CD4-positive, alpha-beta memory T cell (primary cell): ENCODE measurements at regions of chr17 and their contacts with region 1.

Region 1: DNA sequence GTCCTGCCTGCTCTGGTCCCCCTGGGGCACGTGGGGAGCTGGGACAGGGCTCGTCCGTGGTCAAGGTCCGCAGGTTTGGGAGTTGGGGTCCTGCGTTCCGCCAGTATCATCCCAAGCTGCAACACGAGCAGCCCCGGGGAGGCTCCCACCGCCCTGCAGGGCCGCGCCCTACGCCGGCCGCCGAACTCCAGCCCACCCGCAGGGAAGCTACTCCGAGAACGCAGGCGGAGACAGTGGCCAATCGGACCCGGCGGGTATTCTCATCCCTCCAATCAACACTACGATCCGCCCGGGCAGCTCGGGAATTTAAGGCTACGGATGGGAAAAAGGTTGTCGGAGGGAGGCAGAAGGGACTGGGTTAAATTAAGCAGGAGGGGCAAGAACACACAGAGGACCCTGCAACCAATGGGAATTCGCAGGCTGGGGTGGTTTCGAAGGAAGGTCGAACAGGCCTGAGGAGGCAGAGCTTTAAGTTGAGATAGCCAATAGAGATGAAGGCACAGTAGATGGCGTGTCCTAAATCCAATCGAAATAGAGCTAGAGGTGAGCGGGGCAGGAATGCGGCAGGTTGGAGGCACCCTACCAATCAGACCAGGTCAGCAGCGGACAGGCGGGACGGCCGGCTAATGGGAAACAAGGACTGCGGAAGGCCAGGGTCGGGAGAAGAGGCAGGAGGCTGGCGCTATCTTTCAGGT is 626 bp downstream of the SPAG7 start:
- DNase-seq: peak; percentile 96 to 99 (median 98)
- H3K4me3 ChIP-seq: peak overlapping the region; percentile 64 to 95
- H3K4me3 Mint-ChIP-seq: peak overlapping the region in 1 of 8 donors; percentile 56
- H3K27ac ChIP-seq: peak overlapping the region; percentile 81
- H3K27ac Mint-ChIP-seq: peak overlapping the region in 2 of 7 donors; percentile 81 to 85
- H3K4me1 ChIP-seq: peaks cover 28% of the 10 kb centered on the region
- H3K4me1 Mint-ChIP-seq: peaks cover 16 to 27% (median 24%) of the 10 kb centered on the region in 4 donors
- H3K27me3 ChIP-seq: no peaks in the 10 kb centered on the region
- H3K27me3 Mint-ChIP-seq: no peaks in the 10 kb centered on the region

Region 2: GRCh38 chr17:4733073-4733531 is 233.9 kb before region 1 on chr17:
- CTCF ChIA-PET with region 1: no interaction called
- POLR2A ChIA-PET with region 1: no interaction called
- intact Hi-C with region 1: loop called (anchors 2 kb)
- DNase-seq: no peak
- H3K4me3 ChIP-seq: no peak overlapping the region
- H3K4me3 Mint-ChIP-seq: peak overlapping the region in 2 of 8 donors; percentile 51 to 67
- H3K27ac ChIP-seq: no peak overlapping the region
- H3K27ac Mint-ChIP-seq: peak overlapping the region in 1 of 7 donors; percentile 90
- H3K4me1 ChIP-seq: peaks cover 18% of the 10 kb centered on the region
- H3K4me1 Mint-ChIP-seq: peaks cover 9 to 32% (median 16%) of the 10 kb centered on the region in 4 donors
- H3K27me3 ChIP-seq: no peaks in the 10 kb centered on the region
- H3K27me3 Mint-ChIP-seq: no peaks in the 10 kb centered on the region

Region 3: DNA sequence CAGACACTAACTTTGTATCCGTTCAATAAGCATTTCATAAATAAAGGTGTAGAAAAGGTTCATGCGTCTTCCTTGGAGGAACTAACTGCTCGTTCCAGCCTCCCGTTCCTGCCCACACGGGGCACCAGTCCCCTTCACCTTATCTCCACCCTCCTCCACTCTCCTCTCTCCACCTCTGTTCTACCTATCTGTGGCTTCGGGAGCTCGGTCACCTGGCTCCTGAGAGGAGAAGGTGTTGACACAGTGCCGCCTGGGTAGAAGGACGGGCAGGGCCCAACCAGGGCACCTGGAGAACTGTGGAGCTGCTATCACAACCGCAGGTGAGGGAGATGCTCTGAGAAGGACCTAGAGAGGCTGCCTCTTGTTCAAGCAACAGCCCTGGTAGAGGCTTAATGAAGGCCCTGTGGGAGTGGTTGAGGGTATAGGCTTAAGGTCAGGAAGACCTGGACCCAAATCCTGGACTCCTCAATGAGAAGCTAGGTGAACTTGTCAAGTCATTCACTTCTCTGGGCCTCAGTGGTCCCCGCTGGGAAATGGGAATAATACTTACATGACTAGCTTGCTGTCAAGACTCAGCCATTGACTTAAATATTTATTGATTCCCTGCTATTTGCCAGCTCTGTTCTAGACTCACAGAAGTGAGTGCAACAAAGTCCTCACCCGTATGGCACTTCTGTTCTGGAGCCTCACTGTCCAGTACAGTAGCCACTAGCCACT is 143.5 kb before region 1 on chr17:
- CTCF ChIA-PET with region 1: no interaction called
- POLR2A ChIA-PET with region 1: no interaction called
- intact Hi-C with region 1: no loop called
- DNase-seq: no peak
- H3K4me3 ChIP-seq: no peak overlapping the region
- H3K4me3 Mint-ChIP-seq: no peak overlapping the region
- H3K27ac ChIP-seq: no peak overlapping the region
- H3K27ac Mint-ChIP-seq: peak overlapping the region in 1 of 7 donors; percentile 47
- H3K4me1 ChIP-seq: no peaks in the 10 kb centered on the region
- H3K4me1 Mint-ChIP-seq: no peaks in the 10 kb centered on the region
- H3K27me3 ChIP-seq: no peaks in the 10 kb centered on the region
- H3K27me3 Mint-ChIP-seq: no peaks in the 10 kb centered on the region

Region 4: GRCh38 chr17:4908301-4908700 is 58.7 kb before region 1 on chr17:
- CTCF ChIA-PET with region 1: interaction called, 24 read pairs
- POLR2A ChIA-PET with region 1: interaction called, 46 read pairs
- intact Hi-C with region 1: loop called (anchors 1 kb)
- DNase-seq: no peak
- H3K4me3 ChIP-seq: no peak overlapping the region
- H3K4me3 Mint-ChIP-seq: no peak overlapping the region
- H3K27ac ChIP-seq: peak overlapping the region; percentile 5
- H3K27ac Mint-ChIP-seq: no peak overlapping the region
- H3K4me1 ChIP-seq: peaks cover 22% of the 10 kb centered on the region
- H3K4me1 Mint-ChIP-seq: peaks cover 4 to 11% (median 6%) of the 10 kb centered on the region in 4 donors
- H3K27me3 ChIP-seq: no peaks in the 10 kb centered on the region
- H3K27me3 Mint-ChIP-seq: no peaks in the 10 kb centered on the region

Region 5: GRCh38 chr17:4948931-4949320 is 18.1 kb before region 1 on chr17:
- CTCF ChIA-PET with region 1: interaction called, 15 read pairs
- POLR2A ChIA-PET with region 1: interaction called, 973 read pairs
- intact Hi-C with region 1: loop called (anchors 1 kb)
- DNase-seq: peak in 4 of 5 donors; percentile 78 to 82 (median 80)
- H3K4me3 ChIP-seq: peak overlapping the region; percentile 61 to 94
- H3K4me3 Mint-ChIP-seq: peak overlapping the region; percentile 95 to 100 (median 99)
- H3K27ac ChIP-seq: peak overlapping the region; percentile 94
- H3K27ac Mint-ChIP-seq: peak overlapping the region; percentile 92 to 100 (median 98)
- H3K4me1 ChIP-seq: peaks cover 43% of the 10 kb centered on the region
- H3K4me1 Mint-ChIP-seq: peaks cover 24 to 63% (median 39%) of the 10 kb centered on the region in 4 donors
- H3K27me3 ChIP-seq: no peaks in the 10 kb centered on the region
- H3K27me3 Mint-ChIP-seq: no peaks in the 10 kb centered on the region

Region 6: GRCh38 chr17:4986951-4987766 is 20.2 kb after region 1 on chr17 and contains the start of gene CAMTA2:
- CTCF ChIA-PET with region 1: interaction called, 29 read pairs
- POLR2A ChIA-PET with region 1: interaction called, 79 read pairs
- intact Hi-C with region 1: loop called (anchors 1 kb)
- DNase-seq: peak; percentile 78 to 90 (median 81)
- H3K4me3 ChIP-seq: peak within 1 kb of the TSS; percentile 74 to 95
- H3K4me3 Mint-ChIP-seq: peak within 1 kb of the TSS; percentile 92 to 95 (median 93)
- H3K27ac ChIP-seq: peak within 1 kb of the TSS; percentile 85
- H3K27ac Mint-ChIP-seq: peak within 1 kb of the TSS; percentile 94 to 98 (median 96)
- H3K4me1 ChIP-seq: peaks cover 29% of the 10 kb centered on the region
- H3K4me1 Mint-ChIP-seq: peaks cover 29 to 64% (median 37%) of the 10 kb centered on the region in 4 donors
- H3K27me3 ChIP-seq: no peaks in the 10 kb centered on the region
- H3K27me3 Mint-ChIP-seq: no peaks in the 10 kb centered on the region
- total RNA-seq, gene CAMTA2: 63.0 to 84.8 TPM

Region 7: DNA sequence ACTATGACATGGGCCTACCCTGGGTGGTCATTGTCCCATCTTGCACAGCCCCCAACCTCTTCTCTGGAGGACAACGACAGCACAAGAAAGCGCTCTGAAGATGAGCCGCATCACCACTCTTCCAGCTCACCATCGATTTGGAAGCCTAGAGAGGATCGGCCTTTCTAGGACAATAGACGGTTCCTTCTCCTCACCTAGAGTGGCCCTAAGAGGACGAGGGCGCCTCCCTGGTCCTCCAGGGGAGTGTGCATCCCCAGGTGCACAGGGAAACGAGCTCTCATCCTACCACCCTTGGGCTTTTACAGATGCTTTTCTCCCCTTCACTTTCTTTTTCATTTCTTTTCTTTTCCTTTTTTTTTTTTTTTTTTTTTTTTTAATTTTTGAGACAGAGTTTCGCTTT is 88.6 kb after region 1 on chr17:
- CTCF ChIA-PET with region 1: interaction called, 26 read pairs
- POLR2A ChIA-PET with region 1: interaction called, 4 read pairs
- intact Hi-C with region 1: no loop called
- DNase-seq: no peak
- H3K4me3 ChIP-seq: no peak overlapping the region
- H3K4me3 Mint-ChIP-seq: no peak overlapping the region
- H3K27ac ChIP-seq: no peak overlapping the region
- H3K27ac Mint-ChIP-seq: peak overlapping the region in 2 of 7 donors; percentile 22 to 35
- H3K4me1 ChIP-seq: peaks cover 2% of the 10 kb centered on the region
- H3K4me1 Mint-ChIP-seq: peaks cover under 1 to 3% (median 1%) of the 10 kb centered on the region in 4 donors
- H3K27me3 ChIP-seq: no peaks in the 10 kb centered on the region
- H3K27me3 Mint-ChIP-seq: peaks cover 0 to 1% of the 10 kb centered on the region in 2 donors